Activated naive CD8-positive, alpha-beta T cell treated with anti-CD3 and anti-CD28 coated beads, Interleukin-2, amount 10 ng/mL, durations not matched to agents 7 days and 5 days (primary cell): ENCODE measurements at regions of chr14 and their contacts with region 1.

Region 1: GRCh38 chr14:54509546-54510501 is at the start of gene CGRRF1:
- DNase-seq: peak; percentile 98
- ATAC-seq: peak; percentile 100
- H3K4me3 Mint-ChIP-seq: peak within 1 kb of the TSS; percentile 95
- H3K27ac Mint-ChIP-seq: peak within 1 kb of the TSS; percentile 90
- H3K4me1 Mint-ChIP-seq: peaks cover 30% of the 10 kb centered on the region
- H3K27me3 Mint-ChIP-seq: peaks cover 5% of the 10 kb centered on the region
- total RNA-seq, gene CGRRF1: 14.7 to 17.3 TPM

Region 2: GRCh38 chr14:54488646-54489317 is 21.0 kb before region 1 on chr14 and contains the start of gene GMFB:
- POLR2A ChIA-PET with region 1: interaction called, 17 read pairs
- DNase-seq: peak; percentile 90
- ATAC-seq: peak; percentile 94
- H3K4me3 Mint-ChIP-seq: peak within 1 kb of the TSS; percentile 98
- H3K27ac Mint-ChIP-seq: peak within 1 kb of the TSS; percentile 95
- H3K4me1 Mint-ChIP-seq: peaks cover 40% of the 10 kb centered on the region
- H3K27me3 Mint-ChIP-seq: no peaks in the 10 kb centered on the region
- total RNA-seq, gene GMFB: 31.3 to 36.4 TPM

Region 3: DNA sequence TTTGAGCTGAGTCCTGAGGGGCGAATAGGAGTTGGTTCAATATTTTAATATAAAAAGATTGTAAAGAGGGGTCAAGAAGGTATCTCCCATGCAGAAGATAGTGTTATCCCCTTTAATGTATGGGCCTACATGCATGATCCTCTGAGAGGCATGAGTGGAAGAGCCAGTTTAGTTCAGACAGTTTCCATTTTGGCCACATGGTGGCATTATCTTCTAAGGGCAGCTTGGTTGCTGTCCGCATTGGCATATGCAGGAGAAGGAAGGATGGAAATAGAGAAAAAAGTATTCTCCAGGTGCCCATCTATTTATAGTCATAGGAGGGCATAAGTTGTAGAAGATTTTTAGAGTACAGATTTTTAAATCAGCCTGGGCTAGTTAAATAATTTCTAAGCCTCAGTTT is 62.5 kb after region 1 on chr14:
- POLR2A ChIA-PET with region 1: no interaction called
- DNase-seq: no peak
- ATAC-seq: no peak
- H3K4me3 Mint-ChIP-seq: no peak overlapping the region
- H3K27ac Mint-ChIP-seq: no peak overlapping the region
- H3K4me1 Mint-ChIP-seq: peaks cover 6% of the 10 kb centered on the region
- H3K27me3 Mint-ChIP-seq: peaks cover 10% of the 10 kb centered on the region